Heart right ventricle (tissue), 16 donors: ENCODE measurements at regions of chr2 and their contacts with region 1.

Region 1: GRCh38 chr2:74919827-74920226 is 38.6 kb upstream of the POLE4 start:
- DNase-seq: peak; percentile 36 to 76
- ATAC-seq: peak; percentile 20 to 62 (median 52)
- H3K4me3 ChIP-seq: peak overlapping the region in 5 of 10 donors; percentile 22 to 37 (median 30)
- H3K27ac ChIP-seq: no peak overlapping the region
- H3K4me1 ChIP-seq: peaks cover 0 to 23% (median 6%) of the 10 kb centered on the region in 9 donors
- H3K27me3 ChIP-seq: peaks cover 0 to 35% (median 22%) of the 10 kb centered on the region in 7 donors
- CTCF ChIP-seq: peak; percentile 71 to 93 (median 89)

Region 2: GRCh38 chr2:74864846-74865722 is 54.7 kb before region 1 on chr2:
- intact Hi-C with region 1: no loop called
- DNase-seq: no peak
- ATAC-seq: peak in 5 of 8 donors; percentile 8 to 45 (median 19)
- H3K4me3 ChIP-seq: no peak overlapping the region
- H3K27ac ChIP-seq: no peak overlapping the region
- H3K4me1 ChIP-seq: peaks cover 0 to 49% (median 14%) of the 10 kb centered on the region in 9 donors
- H3K27me3 ChIP-seq: no peaks in the 10 kb centered on the region
- CTCF ChIP-seq: no peak

Region 3: GRCh38 chr2:75053484-75054112 is 133.8 kb after region 1 on chr2:
- intact Hi-C with region 1: loop called in 1 of 10 experiments (anchors 10 kb)
- DNase-seq: no peak
- ATAC-seq: peak in 1 of 8 donors; percentile 63
- H3K4me3 ChIP-seq: no peak overlapping the region
- H3K27ac ChIP-seq: no peak overlapping the region
- H3K4me1 ChIP-seq: peaks cover 0 to 18% (median 0%) of the 10 kb centered on the region in 9 donors
- H3K27me3 ChIP-seq: no peaks in the 10 kb centered on the region
- CTCF ChIP-seq: peak in 7 of 9 donors; percentile 41 to 57 (median 44)

Region 4: DNA sequence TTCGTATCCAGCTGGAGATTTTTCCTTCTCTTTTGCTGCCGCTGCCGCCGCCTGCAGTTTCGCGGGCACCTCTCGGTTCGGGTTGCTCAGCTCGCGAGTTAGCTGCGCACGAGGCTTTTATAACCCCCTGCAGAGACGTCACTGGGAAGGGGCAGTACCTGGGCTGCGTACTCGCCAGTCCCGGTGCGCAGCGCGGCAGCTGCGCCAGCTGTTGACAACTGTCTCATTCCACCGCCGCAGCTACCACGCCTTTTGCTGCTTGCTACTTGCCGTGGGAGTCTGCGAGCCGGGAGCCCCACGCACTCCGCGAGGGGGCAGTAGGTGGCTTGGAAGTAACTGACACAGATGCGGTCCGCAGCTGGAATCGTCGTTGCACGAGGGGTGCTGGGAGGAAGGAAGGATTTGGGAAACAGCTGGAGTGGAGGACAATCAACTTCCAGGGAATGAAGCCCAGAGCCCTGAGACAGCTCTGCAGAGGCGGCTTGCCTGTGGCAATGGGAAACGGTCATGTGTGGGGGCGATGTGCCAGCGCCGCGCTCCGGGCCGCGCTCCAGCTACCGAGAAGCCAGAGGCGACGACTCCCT is 279.7 kb after region 1 on chr2 and contains the start of gene TACR1:
- intact Hi-C with region 1: loop called in 1 of 10 experiments (anchors 10 kb)
- DNase-seq: peak; percentile 52 to 64
- ATAC-seq: peak; percentile 69 to 87 (median 78)
- H3K4me3 ChIP-seq: peak within 1 kb of the TSS; percentile 27 to 55 (median 45)
- H3K27ac ChIP-seq: no peak within 1 kb of the TSS
- H3K4me1 ChIP-seq: peaks cover 5 to 24% (median 19%) of the 10 kb centered on the region in 9 donors
- H3K27me3 ChIP-seq: peaks cover 0 to 92% (median 64%) of the 10 kb centered on the region in 7 donors
- CTCF ChIP-seq: peak in 8 of 9 donors; percentile 21 to 73 (median 60)
- total RNA-seq, gene TACR1: 0.07 to 0.38 (median 0.21) TPM in 7 of 10 donors, not detected in the others

Region 5: GRCh38 chr2:75403991-75404428 is 484.2 kb after region 1 on chr2:
- intact Hi-C with region 1: loop called (anchors 1 to 10 kb)
- DNase-seq: peak in 1 of 2 donors; percentile 7
- ATAC-seq: peak in 4 of 8 donors; percentile 47 to 61 (median 50)
- H3K4me3 ChIP-seq: no peak overlapping the region
- H3K27ac ChIP-seq: no peak overlapping the region
- H3K4me1 ChIP-seq: no peaks in the 10 kb centered on the region
- H3K27me3 ChIP-seq: peaks cover 0 to 59% (median 28%) of the 10 kb centered on the region in 7 donors
- CTCF ChIP-seq: peak; percentile 64 to 91 (median 79)

Region 6: GRCh38 chr2:75619956-75620740 is 700.3 kb after region 1 on chr2:
- intact Hi-C with region 1: loop called in 4 of 10 experiments (anchors 10 kb)
- DNase-seq: no peak
- ATAC-seq: no peak
- H3K4me3 ChIP-seq: no peak overlapping the region
- H3K27ac ChIP-seq: no peak overlapping the region
- H3K4me1 ChIP-seq: no peaks in the 10 kb centered on the region
- H3K27me3 ChIP-seq: peaks cover 0 to 7% (median 0%) of the 10 kb centered on the region in 7 donors
- CTCF ChIP-seq: no peak